Breast epithelium (tissue), 4 donors: ENCODE measurements at regions of chr4 and their contacts with region 1.

Region 1: DNA sequence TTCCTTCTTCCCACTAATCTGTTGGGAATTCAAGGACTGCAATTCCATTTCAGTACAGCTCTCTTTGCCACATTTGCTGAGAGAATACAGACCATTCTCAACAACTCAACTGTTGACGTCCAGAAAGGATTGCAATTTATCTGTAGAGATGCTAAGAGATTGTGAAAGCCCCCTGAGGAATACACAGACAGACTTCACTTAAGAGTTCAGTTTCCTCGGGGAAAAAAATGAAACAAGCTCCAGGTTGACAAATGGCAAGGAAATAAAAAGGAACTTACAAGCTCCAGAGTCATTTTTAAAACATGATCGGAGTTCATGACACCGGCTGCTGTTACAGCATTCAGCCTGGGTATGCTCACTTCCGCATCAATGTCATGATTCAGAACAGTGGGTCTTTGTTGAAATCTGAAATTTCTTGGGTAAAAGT is 13.8 kb downstream of the TLR10 start:
- DNase-seq: no peak
- H3K4me3 ChIP-seq: no peak overlapping the region
- H3K27ac ChIP-seq: no peak overlapping the region
- H3K4me1 ChIP-seq: no peaks in the 10 kb centered on the region
- H3K27me3 ChIP-seq: no peaks in the 10 kb centered on the region
- CTCF ChIP-seq: no peak
- POLR2A ChIP-seq: no peak

Region 2: GRCh38 chr4:38691251-38692008 is 77.6 kb before region 1 on chr4:
- intact Hi-C with region 1: no loop called
- DNase-seq: no peak
- H3K4me3 ChIP-seq: no peak overlapping the region
- H3K27ac ChIP-seq: no peak overlapping the region
- H3K4me1 ChIP-seq: no peaks in the 10 kb centered on the region
- H3K27me3 ChIP-seq: no peaks in the 10 kb centered on the region
- CTCF ChIP-seq: no peak
- POLR2A ChIP-seq: no peak

Region 3: DNA sequence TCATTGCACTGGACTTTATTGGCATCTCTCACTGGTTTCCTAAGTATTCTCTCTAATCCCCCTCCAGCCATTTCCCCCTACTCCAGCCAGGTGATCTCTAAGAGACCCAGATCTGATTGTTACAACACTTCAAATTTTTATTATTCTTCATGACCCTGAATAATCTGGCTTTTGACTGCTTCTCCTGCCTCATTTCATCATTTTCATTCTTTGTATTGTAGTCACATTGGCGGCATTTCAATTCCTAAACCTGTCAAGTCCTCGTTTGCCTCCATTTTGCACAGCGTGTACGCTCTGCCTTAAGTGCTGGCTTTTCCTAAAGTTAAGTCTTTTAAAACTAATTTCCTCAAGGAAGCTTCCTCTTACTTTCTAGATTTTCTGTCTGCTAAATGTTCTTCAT is 960.6 kb after region 1 on chr4:
- intact Hi-C with region 1: loop called (anchors 5 kb)
- DNase-seq: no peak
- H3K4me3 ChIP-seq: no peak overlapping the region
- H3K27ac ChIP-seq: peak overlapping the region in 1 of 2 donors; percentile 2
- H3K4me1 ChIP-seq: no peaks in the 10 kb centered on the region
- H3K27me3 ChIP-seq: no peaks in the 10 kb centered on the region
- CTCF ChIP-seq: no peak
- POLR2A ChIP-seq: no peak